ENCODE measurements at regions of chr9 and their contacts with region 1.

Region 1: DNA sequence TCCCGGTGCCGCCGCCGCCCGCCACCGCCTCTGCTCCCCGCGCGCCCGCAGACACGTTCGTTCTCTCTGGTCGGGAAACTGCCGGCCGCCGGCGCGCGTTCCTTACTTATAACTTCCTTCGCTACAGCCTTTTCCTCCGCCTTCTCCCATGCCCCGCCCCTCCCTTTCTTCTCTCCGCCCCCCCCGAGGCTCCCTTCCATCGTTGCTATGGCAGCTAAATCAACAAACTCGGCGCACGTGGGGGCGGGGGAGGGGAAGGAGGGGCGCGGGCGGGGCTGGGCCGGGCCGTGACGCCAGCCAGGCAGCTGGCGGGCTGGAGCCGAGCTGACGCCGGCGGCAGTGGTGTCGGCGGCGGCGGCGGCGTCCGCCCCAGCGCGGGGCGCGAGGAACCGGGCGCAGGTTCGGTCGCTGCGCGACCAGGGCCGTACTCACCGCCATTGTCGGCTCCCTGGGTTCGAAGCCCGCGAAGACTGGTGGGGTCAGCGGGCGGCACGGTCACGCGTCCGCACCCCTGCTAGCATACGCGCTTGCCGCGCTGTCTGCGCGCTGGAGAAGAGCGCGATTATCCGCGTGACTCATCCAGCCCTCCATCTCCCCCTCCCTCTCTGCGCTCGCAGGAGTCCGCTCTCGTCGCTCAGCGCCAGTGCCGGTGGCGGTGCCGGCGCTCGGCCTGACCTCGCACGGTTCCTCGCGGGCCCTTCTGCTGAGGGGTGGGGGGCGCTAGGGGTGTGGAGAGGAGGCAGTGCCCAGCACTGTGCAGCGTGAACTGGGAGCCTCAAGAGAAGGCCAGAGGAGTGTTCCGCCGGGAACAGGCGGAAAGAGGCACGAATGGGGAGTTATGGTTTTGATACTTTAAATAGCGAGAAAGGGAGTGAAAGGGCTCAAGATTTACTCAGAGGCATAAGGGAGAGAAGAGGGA is at the start of gene KLF4:
- DNase-seq: peak; percentile 91
- ATAC-seq: peak; percentile 78
- H3K4me3 ChIP-seq: peak within 1 kb of the TSS; percentile 60
- H3K27ac ChIP-seq: peak within 1 kb of the TSS; percentile 60
- H3K4me1 ChIP-seq: peaks cover 2% of the 10 kb centered on the region; the same call in 1 of the 2 replicates
- H3K27me3 ChIP-seq: peaks cover 1% of the 10 kb centered on the region; the same call in 1 of the 2 replicates
- CTCF ChIP-seq: 0 out of 2 replicates have a peak, but pooled peaks have one; percentile 0
- POLR2A ChIP-seq: peak; percentile 93
- RAD21 ChIP-seq: no peak
- total RNA-seq, gene KLF4: 1.3 and 2.2 TPM in 2 replicates

Region 2: DNA sequence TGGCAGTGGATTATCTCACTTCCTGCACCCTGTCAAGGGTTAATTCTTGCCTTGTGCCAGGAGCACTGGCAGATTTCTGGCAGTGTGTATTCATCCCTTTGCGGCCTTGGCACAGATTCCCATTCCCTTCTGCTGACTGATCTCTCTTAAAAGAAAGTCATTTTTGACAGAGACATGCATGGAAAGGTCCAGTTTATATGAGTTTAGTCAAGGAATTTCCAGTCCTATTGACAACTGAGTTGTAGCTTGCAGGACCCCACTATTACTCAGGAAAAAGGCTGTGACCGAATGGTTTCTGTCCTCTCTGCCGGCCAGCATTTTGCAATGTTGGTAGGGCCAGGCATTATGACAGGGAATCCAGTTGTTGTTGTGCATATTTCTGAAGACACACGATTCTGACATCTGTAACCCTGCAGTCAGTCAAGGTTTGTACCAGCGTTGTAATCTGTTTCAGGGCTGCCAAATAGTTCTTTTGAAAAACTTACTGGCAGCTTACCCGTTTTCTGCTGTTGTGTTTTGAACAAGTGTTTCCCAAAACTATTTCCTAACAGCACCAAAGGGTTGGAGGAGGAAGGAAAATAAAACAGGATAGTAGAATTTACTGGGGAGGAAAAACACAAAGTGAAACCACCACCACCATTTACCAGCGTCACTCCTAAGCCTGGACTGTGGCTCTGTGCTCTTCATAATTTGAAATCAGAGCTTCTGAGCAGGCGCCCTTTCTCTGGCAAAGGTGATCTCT is 243.0 kb after region 1 on chr9:
- CTCF ChIA-PET with region 1: no interaction called
- POLR2A ChIA-PET with region 1: no interaction called
- dilution Hi-C with region 1: no loop called
- in situ Hi-C with region 1: loop called (anchors 10 kb)
- intact Hi-C with region 1: loop called (anchors 2 kb)
- DNase-seq: peak; percentile 73
- ATAC-seq: peak; percentile 38
- H3K4me3 ChIP-seq: peak overlapping the region; percentile 23; the same call in 1 of the 2 replicates
- H3K27ac ChIP-seq: peak overlapping the region; percentile 98
- H3K4me1 ChIP-seq: peaks cover 24% of the 10 kb centered on the region
- H3K27me3 ChIP-seq: no peaks in the 10 kb centered on the region
- CTCF ChIP-seq: no peak
- POLR2A ChIP-seq: no peak
- RAD21 ChIP-seq: no peak

Region 3: GRCh38 chr9:107847978-107848964 is 358.3 kb after region 1 on chr9:
- CTCF ChIA-PET with region 1: no interaction called
- POLR2A ChIA-PET with region 1: no interaction called
- dilution Hi-C with region 1: no loop called
- in situ Hi-C with region 1: no loop called
- intact Hi-C with region 1: loop called (anchors 10 kb)
- DNase-seq: peak; percentile 34
- ATAC-seq: peak; percentile 64
- H3K4me3 ChIP-seq: no peak overlapping the region
- H3K27ac ChIP-seq: no peak overlapping the region
- H3K4me1 ChIP-seq: no peaks in the 10 kb centered on the region; the same call in 1 of the 2 replicates
- H3K27me3 ChIP-seq: no peaks in the 10 kb centered on the region; the same call in 1 of the 2 replicates
- CTCF ChIP-seq: no peak
- POLR2A ChIP-seq: no peak
- RAD21 ChIP-seq: no peak

Region 4: DNA sequence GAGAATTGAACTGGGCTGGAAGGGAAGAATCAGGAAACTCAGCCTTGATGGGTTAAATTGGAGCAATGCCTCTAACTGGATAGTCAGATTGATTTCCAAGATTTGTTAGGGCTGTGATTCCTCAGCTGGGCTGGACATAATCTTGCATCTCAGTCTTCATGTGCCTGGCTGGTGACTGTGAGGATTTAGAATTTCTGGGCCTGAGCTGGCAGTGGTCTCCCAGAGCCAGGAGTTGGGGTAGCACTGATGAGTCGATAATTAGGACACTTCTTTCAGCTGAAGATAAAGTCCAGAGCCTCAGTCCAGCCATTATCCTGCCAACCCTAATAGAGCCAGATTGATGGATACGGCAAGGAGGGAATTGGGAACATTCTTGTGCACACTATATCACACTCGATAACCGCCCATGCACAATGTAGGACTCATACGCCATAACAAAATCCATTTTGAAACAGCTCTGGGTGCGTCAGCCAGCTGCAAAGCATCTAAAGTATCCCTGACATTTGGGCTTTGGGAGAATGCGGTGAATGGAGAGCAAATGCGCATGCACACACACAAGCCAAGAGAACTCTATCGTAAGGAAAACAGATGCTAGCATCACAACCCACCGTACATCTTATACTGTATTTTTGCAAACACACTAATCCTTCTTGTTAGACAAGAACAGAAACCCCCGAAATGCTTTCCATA is 404.8 kb after region 1 on chr9:
- CTCF ChIA-PET with region 1: no interaction called
- POLR2A ChIA-PET with region 1: no interaction called
- dilution Hi-C with region 1: no loop called
- in situ Hi-C with region 1: loop called (anchors 25 kb)
- intact Hi-C with region 1: loop called (anchors 2 kb)
- DNase-seq: peak; percentile 93
- ATAC-seq: peak; percentile 84
- H3K4me3 ChIP-seq: no peak overlapping the region
- H3K27ac ChIP-seq: peak overlapping the region; percentile 82; the same call in 1 of the 2 replicates
- H3K4me1 ChIP-seq: peaks cover 12% of the 10 kb centered on the region
- H3K27me3 ChIP-seq: no peaks in the 10 kb centered on the region
- CTCF ChIP-seq: no peak
- POLR2A ChIP-seq: no peak
- RAD21 ChIP-seq: no peak

Region 5: DNA sequence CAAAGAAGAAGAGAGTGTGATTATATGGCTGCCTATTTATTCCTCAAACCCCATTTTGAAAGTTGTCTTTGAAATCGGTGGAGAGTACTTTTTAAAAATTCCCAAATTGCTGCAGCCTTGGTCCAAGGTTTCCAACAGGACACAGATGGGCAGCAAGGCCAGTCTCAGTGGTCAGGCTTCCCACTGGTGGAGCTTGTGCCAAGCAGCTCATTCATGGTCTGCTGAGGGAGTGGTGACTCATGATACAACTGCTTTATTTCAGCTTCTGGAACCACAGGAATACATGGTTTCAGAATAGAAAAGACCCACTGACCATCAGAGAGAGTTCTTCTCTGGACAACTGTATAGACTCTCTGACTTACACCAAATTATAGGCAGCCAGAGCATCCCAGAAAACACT is 672.7 kb after region 1 on chr9:
- CTCF ChIA-PET with region 1: no interaction called
- POLR2A ChIA-PET with region 1: no interaction called
- dilution Hi-C with region 1: no loop called
- in situ Hi-C with region 1: no loop called
- intact Hi-C with region 1: loop called (anchors 10 kb)
- DNase-seq: peak; percentile 80
- ATAC-seq: peak; percentile 91
- H3K4me3 ChIP-seq: no peak overlapping the region
- H3K27ac ChIP-seq: no peak overlapping the region
- H3K4me1 ChIP-seq: peaks cover 5% of the 10 kb centered on the region; the same call in 1 of the 2 replicates
- H3K27me3 ChIP-seq: peaks cover 5% of the 10 kb centered on the region
- CTCF ChIP-seq: no peak
- POLR2A ChIP-seq: no peak
- RAD21 ChIP-seq: no peak

Measured in IMR-90 (cell line).